Heart right ventricle (tissue), 16 donors: ENCODE measurements at regions of chr20 and their contacts with region 1.

Region 1: DNA sequence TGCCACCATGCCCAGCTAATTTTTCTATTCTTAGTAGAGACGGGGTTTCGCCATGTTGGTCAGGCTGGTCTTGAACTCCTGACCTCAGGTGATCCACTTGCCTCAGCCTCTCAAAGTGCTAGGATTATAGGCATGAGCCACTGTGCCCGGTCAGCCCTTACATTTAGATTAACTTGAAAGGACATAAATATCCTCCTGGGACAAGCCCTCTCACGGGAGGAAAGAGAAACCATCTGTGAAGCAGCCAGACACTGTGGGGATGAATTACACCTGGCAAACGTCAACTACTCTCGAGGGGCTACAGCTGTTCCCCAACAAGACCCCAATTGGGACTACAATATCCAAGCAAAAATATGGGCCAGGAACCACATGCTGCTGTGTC is 32.7 kb upstream of the SAMHD1 start:
- DNase-seq: no peak
- ATAC-seq: no peak
- H3K4me3 ChIP-seq: no peak overlapping the region
- H3K27ac ChIP-seq: no peak overlapping the region
- H3K4me1 ChIP-seq: peaks cover 0 to 14% (median 0%) of the 10 kb centered on the region in 9 donors
- H3K27me3 ChIP-seq: no peaks in the 10 kb centered on the region
- CTCF ChIP-seq: no peak

Region 2: DNA sequence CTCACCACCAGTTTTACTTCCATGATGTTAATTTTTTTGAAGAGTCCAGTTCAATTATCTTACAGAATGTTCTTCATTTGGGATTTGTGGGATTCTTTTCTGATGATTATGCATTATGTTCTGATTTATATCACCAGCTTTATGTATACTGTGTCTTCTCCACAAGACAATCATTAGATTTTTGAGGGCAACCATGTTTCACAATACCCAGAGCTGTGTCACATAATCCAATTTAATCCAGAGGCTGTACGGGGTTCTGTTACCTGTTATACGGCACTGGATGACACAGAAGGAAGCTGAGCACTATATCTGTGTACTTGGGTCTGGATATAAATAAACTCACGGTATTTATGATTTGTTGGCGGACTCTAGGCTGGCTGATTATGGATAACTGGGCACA is 153.3 kb after region 1 on chr20:
- intact Hi-C with region 1: loop called in 1 of 10 experiments (anchors 5 kb)
- DNase-seq: no peak
- ATAC-seq: no peak
- H3K4me3 ChIP-seq: no peak overlapping the region
- H3K27ac ChIP-seq: no peak overlapping the region
- H3K4me1 ChIP-seq: peaks cover 0 to 18% (median 0%) of the 10 kb centered on the region in 9 donors
- H3K27me3 ChIP-seq: no peaks in the 10 kb centered on the region
- CTCF ChIP-seq: no peak